Psoas muscle (tissue), 8 donors: ENCODE measurements at regions of chr14 and their contacts with region 1.

Region 1: DNA sequence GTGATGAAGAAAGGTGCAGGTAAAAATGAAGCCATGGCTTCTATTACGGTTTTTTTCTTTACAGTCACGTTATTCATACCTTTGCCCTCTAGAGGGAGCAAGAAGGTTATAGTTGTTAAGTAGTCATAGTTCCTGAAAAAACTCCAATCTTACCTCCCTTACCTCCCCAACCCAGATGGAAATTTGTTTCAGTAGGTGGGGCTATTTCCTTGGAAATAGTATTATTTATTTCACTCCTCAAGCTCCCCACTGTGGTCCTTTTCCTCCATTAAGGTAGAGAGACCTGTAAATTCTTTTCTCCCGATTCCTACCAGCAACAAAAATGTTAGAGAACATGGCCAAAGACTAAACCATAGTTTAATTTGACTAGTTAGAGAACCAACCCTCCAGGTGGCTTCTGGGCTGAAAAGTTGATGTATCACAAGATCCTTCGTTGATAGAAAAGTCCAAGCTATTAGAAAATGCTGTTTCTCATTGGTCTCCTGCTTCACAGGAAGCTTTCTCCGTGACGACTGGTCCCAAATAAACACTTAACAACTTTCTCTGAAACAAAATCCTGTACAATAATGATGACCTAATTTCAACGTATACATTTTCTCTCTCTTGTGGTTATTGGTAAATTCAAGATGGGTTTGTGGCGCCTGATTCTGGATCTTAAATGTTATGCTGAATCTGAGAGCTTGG is 43.5 kb downstream of the TMX1 start:
- DNase-seq: no peak
- ATAC-seq: peak; percentile 71 to 89 (median 78)
- H3K4me3 ChIP-seq: no peak overlapping the region
- H3K27ac ChIP-seq: no peak overlapping the region
- H3K4me1 ChIP-seq: no peaks in the 10 kb centered on the region
- H3K27me3 ChIP-seq: no peaks in the 10 kb centered on the region
- CTCF ChIP-seq: peak; percentile 81

Region 2: GRCh38 chr14:51357250-51357649 is 73.7 kb after region 1 on chr14:
- intact Hi-C with region 1: no loop called
- DNase-seq: no peak
- ATAC-seq: no peak
- H3K4me3 ChIP-seq: no peak overlapping the region
- H3K27ac ChIP-seq: no peak overlapping the region
- H3K4me1 ChIP-seq: no peaks in the 10 kb centered on the region
- H3K27me3 ChIP-seq: no peaks in the 10 kb centered on the region
- CTCF ChIP-seq: no peak

Region 3: GRCh38 chr14:51369814-51370213 is 86.3 kb after region 1 on chr14:
- intact Hi-C with region 1: loop called in 1 of 2 experiments (anchors 5 kb)
- DNase-seq: no peak
- ATAC-seq: no peak
- H3K4me3 ChIP-seq: no peak overlapping the region
- H3K27ac ChIP-seq: no peak overlapping the region
- H3K4me1 ChIP-seq: no peaks in the 10 kb centered on the region
- H3K27me3 ChIP-seq: no peaks in the 10 kb centered on the region
- CTCF ChIP-seq: peak; percentile 27

Region 4: GRCh38 chr14:51448831-51449670 is 165.5 kb after region 1 on chr14:
- intact Hi-C with region 1: no loop called
- DNase-seq: peak in 1 of 2 donors; percentile 56
- ATAC-seq: peak; percentile 57 to 73 (median 64)
- H3K4me3 ChIP-seq: no peak overlapping the region
- H3K27ac ChIP-seq: no peak overlapping the region
- H3K4me1 ChIP-seq: no peaks in the 10 kb centered on the region
- H3K27me3 ChIP-seq: peaks cover 0 to 4% (median 0%) of the 10 kb centered on the region in 3 donors
- CTCF ChIP-seq: no peak

Region 5: DNA sequence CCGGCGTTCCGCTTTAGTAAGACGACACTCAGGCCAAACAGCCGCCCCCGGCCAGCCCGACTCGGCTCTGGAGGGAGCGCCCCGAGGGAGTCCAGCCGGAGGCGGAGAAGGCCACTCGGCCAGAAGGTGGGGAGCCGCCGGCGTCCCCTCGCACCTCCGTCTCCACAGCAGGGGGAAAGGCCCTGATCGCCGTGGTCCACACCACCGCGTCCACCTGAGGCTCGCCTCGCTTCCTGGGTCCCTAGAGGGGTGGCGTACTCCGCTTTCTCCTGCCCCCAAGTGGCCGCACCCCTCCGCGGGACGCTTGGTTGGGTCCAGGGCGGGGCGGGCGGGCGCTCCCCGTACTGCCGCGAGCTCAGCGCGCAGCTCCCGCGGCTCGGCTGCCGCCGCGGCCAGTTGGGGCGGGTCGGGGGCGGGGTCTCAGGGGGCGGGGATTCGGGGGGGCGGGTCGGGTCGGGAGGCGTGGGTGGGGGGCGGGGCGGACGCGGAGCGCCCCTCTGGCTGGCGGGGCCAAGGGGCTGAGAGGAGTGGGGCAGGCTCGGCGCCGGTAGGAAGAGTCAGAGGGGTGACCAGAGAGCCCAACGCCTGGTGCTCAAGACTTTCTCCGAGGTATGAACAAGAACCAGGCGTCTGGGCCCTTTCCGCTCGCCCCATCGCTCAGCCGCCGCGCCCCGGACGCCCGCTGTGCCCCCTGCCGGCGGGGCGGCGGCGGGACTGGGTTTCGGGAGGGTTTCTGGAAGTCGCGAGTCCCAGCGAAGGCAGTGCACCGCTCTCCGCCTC is 368.0 kb after region 1 on chr14 and contains the start of gene FRMD6:
- intact Hi-C with region 1: loop called (anchors 5 kb)
- DNase-seq: peak; percentile 91 to 94
- ATAC-seq: peak; percentile 91 to 96 (median 92)
- H3K4me3 ChIP-seq: peak within 1 kb of the TSS; percentile 86
- H3K27ac ChIP-seq: peak within 1 kb of the TSS; percentile 91
- H3K4me1 ChIP-seq: no peaks in the 10 kb centered on the region
- H3K27me3 ChIP-seq: no peaks in the 10 kb centered on the region
- CTCF ChIP-seq: peak; percentile 72
- total RNA-seq, gene FRMD6: 5.0 to 9.8 (median 5.9) TPM